Activated T-helper 1 cell treated with anti-CD3 and anti-CD28 coated beads, Interleukin-12 subunit alpha, Interleukin-12 subunit beta, Interleukin-2, Interleukin-4 antibody, amounts not matched to agents 30 ng/mL and 10 ng/mL and 1 ng/mL, durations not matched to agents 14 hours and 24 hours and 36 hours (primary cell): ENCODE measurements at regions of chr10 and their contacts with region 1.

Region 1: DNA sequence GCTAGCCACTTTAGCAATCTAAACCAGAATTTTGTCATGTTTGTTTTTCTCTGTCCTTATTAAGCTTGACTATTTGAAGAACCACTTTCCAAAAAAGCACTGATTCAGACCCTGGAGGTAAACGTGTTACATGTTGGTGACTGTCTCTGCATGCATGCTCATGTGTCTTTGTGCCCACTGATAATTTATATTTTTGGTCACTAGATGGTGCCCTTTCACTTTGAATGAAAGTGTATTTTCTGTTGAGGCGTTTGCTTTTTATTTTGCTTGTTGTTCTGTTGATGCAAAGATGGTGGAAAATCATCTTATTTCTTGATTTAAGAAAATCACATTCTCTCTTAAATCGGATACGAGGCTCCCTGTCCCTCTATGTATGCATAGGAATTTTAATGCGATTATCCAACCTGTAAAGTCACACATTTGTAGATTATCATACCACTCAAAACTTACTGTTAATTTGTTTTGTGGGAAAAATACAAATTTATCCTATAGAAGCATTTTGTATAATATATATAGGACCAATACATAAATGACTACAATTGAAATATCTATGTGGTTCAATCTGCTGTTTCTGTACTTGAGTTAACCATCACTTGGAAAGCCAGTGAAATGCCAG is 269.3 kb downstream of the BICC1 start:
- DNase-seq: no peak
- H3K4me3 Mint-ChIP-seq: no peak overlapping the region
- H3K27ac Mint-ChIP-seq: no peak overlapping the region
- H3K4me1 Mint-ChIP-seq: no peaks in the 10 kb centered on the region
- H3K27me3 Mint-ChIP-seq: no peaks in the 10 kb centered on the region

Region 2: GRCh38 chr10:58531084-58531695 is 250.8 kb before region 1 on chr10:
- intact Hi-C with region 1: loop called (anchors 1 kb)
- DNase-seq: peak; percentile 17
- H3K4me3 Mint-ChIP-seq: no peak overlapping the region
- H3K27ac Mint-ChIP-seq: no peak overlapping the region
- H3K4me1 Mint-ChIP-seq: no peaks in the 10 kb centered on the region
- H3K27me3 Mint-ChIP-seq: peaks cover 9% of the 10 kb centered on the region

Region 3: DNA sequence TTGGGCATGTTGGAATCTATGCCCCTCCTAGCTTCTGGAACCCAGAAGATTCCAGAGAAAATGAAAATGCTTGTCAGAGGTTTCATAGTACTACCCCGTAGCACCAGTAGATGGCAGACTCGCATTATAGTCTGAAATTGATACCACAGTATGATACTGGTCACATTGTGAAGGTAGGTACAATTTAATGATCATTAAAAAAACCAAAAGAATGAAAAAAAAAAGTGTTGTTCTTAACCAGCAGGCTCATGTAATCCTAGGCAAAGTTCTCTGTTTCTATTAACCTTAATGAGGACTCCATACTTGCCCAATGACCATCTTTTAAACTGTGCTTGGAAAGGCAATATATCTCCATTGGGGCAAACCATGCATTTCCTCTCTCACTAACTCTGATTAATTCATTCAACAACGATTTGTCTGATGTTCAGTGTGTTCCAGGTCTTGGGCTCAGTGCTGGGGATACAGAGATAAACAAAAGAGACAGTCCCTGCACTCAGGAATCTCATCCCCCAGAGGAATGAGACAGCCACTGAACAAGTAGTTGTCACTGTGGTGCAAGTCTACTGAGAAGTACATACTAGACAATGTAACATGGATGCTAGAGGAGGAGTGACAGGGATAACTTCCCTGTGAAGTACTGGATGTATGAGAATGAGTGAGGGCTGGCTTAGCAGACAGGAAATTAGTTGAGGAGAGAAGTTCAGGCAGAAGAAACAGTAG is 170.9 kb after region 1 on chr10:
- intact Hi-C with region 1: loop called (anchors 10 kb)
- DNase-seq: no peak
- H3K4me3 Mint-ChIP-seq: no peak overlapping the region
- H3K27ac Mint-ChIP-seq: no peak overlapping the region
- H3K4me1 Mint-ChIP-seq: no peaks in the 10 kb centered on the region
- H3K27me3 Mint-ChIP-seq: peaks cover 2% of the 10 kb centered on the region

Region 4: GRCh38 chr10:59240582-59241183 is 458.7 kb after region 1 on chr10:
- intact Hi-C with region 1: loop called (anchors 10 kb)
- DNase-seq: no peak
- H3K4me3 Mint-ChIP-seq: no peak overlapping the region
- H3K27ac Mint-ChIP-seq: no peak overlapping the region
- H3K4me1 Mint-ChIP-seq: no peaks in the 10 kb centered on the region
- H3K27me3 Mint-ChIP-seq: peaks cover 2% of the 10 kb centered on the region